Endothelial cell of umbilical vein (primary cell): ENCODE measurements at regions of chr10 and their contacts with region 1.

Region 1: GRCh38 chr10:69786791-69787190 is 14.9 kb upstream of the COL13A1 start:
- DNase-seq: peak; percentile 66
- H3K4me3 ChIP-seq: no peak overlapping the region
- H3K27ac ChIP-seq: no peak overlapping the region
- H3K4me1 ChIP-seq: no peaks in the 10 kb centered on the region
- H3K27me3 ChIP-seq: peaks cover 24 to 25% of the 10 kb centered on the region in 2 experiments
- CTCF ChIP-seq: peak; percentile 49 to 50
- POLR2A ChIP-seq: no peak

Region 2: GRCh38 chr10:69644658-69645295 is 142.0 kb before region 1 on chr10:
- CTCF ChIA-PET with region 1: interaction called, 12 read pairs
- POLR2A ChIA-PET with region 1: no interaction called
- dilution Hi-C with region 1: no loop called
- intact Hi-C with region 1: no loop called
- DNase-seq: peak; percentile 49
- H3K4me3 ChIP-seq: no peak overlapping the region
- H3K27ac ChIP-seq: no peak overlapping the region
- H3K4me1 ChIP-seq: no peaks in the 10 kb centered on the region
- H3K27me3 ChIP-seq: peaks cover 2 to 3% of the 10 kb centered on the region in 2 experiments
- CTCF ChIP-seq: peak; percentile 84 to 86
- POLR2A ChIP-seq: no peak

Region 3: DNA sequence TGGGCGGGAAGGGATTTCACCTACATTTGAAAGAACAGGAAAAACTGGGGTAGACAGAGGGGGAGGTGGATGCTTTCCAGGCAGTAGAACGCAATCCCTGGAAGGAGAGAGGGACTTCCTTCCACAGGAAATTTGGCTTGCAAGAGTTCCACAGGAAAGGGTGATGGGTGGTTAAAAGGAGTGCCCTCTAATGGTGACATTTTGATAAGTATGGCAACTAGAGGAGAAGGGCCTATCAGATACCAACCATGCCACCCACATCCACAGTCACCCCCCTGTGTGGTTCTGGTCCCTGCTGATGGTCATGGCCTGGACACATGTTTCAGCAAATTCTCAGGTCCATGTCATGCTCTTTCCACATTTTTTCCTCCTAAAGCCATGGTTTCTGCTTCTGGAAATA is 12.2 kb before region 1 on chr10:
- CTCF ChIA-PET with region 1: interaction called, 16 read pairs
- POLR2A ChIA-PET with region 1: no interaction called
- dilution Hi-C with region 1: no loop called
- intact Hi-C with region 1: no loop called
- DNase-seq: no peak
- H3K4me3 ChIP-seq: no peak overlapping the region
- H3K27ac ChIP-seq: no peak overlapping the region
- H3K4me1 ChIP-seq: peaks cover 3% of the 10 kb centered on the region
- H3K27me3 ChIP-seq: peaks cover 2 to 12% of the 10 kb centered on the region in 2 experiments
- CTCF ChIP-seq: no peak
- POLR2A ChIP-seq: no peak

Region 4: GRCh38 chr10:69901628-69902505 is 115.1 kb after region 1 on chr10:
- CTCF ChIA-PET with region 1: interaction called, 33 read pairs
- POLR2A ChIA-PET with region 1: no interaction called
- dilution Hi-C with region 1: no loop called
- intact Hi-C with region 1: no loop called
- DNase-seq: peak; percentile 71
- H3K4me3 ChIP-seq: no peak overlapping the region
- H3K27ac ChIP-seq: peak overlapping the region; percentile 38
- H3K4me1 ChIP-seq: peaks cover 11% of the 10 kb centered on the region
- H3K27me3 ChIP-seq: no peaks in the 10 kb centered on the region
- CTCF ChIP-seq: peak; percentile 71 to 81
- POLR2A ChIP-seq: no peak

Region 5: GRCh38 chr10:69957886-69958555 is 171.2 kb after region 1 on chr10:
- CTCF ChIA-PET with region 1: interaction called, 172 read pairs
- POLR2A ChIA-PET with region 1: no interaction called
- dilution Hi-C with region 1: no loop called
- intact Hi-C with region 1: loop called (anchors 1 kb)
- DNase-seq: peak; percentile 43
- H3K4me3 ChIP-seq: no peak overlapping the region
- H3K27ac ChIP-seq: no peak overlapping the region
- H3K4me1 ChIP-seq: no peaks in the 10 kb centered on the region
- H3K27me3 ChIP-seq: no peaks in the 10 kb centered on the region
- CTCF ChIP-seq: peak; percentile 85 to 90
- POLR2A ChIP-seq: no peak